Activated CD4-positive, alpha-beta memory T cell treated with anti-CD3 and anti-CD28 coated beads for 36 hours (primary cell): ENCODE measurements at regions of chr1 and their contacts with region 1.

Region 1: GRCh38 chr1:168408536-168409242 is 128.0 kb downstream of the TBX19 start:
- DNase-seq: peak; percentile 75
- H3K4me3 Mint-ChIP-seq: peak overlapping the region; percentile 9
- H3K27ac Mint-ChIP-seq: peak overlapping the region; percentile 53
- H3K4me1 Mint-ChIP-seq: peaks cover 40% of the 10 kb centered on the region
- H3K27me3 Mint-ChIP-seq: no peaks in the 10 kb centered on the region

Region 2: DNA sequence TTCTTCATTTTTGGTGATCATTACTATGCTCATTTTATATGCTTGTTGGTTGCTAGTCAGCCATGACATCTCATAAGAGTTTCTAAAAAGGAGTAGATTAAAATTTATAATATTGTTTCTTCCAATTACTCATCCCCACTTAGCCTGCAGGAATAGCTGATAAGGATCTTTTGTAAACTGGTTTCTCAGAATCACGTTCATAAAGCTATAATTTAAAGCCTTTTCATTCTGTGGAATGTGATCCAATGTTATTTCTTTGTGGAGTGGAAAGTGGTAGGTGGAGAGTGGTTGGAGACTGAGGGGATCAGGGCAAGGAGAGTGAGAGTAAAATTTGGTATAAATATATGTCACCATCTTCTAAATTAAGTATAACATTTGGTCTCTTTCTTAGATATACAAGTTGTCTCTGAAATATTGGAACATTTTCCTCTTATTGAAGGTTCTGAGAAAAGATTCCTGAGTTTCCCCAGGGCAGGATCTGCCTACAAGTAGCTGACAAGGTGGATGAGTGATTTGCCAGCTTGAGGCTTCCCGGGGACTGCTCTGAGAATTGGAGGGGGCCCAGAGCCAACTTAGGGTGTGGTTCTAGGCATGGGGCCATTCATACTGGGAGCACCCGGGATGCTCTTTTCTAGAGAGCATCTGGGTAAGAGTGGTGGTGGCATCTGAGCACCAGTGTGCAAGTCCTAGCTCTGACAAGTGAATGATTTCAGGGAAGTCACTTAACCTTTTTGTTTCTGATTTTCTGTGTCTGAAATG is 11.6 kb before region 1 on chr1:
- CTCF ChIA-PET with region 1: no interaction called
- POLR2A ChIA-PET with region 1: interaction called, 3 read pairs
- intact Hi-C with region 1: loop called (anchors 1 kb)
- DNase-seq: no peak
- H3K4me3 Mint-ChIP-seq: no peak overlapping the region
- H3K27ac Mint-ChIP-seq: no peak overlapping the region
- H3K4me1 Mint-ChIP-seq: peaks cover 22% of the 10 kb centered on the region
- H3K27me3 Mint-ChIP-seq: peaks cover 2% of the 10 kb centered on the region